ENCODE measurements at regions of chr12 and their contacts with region 1.

Region 1: DNA sequence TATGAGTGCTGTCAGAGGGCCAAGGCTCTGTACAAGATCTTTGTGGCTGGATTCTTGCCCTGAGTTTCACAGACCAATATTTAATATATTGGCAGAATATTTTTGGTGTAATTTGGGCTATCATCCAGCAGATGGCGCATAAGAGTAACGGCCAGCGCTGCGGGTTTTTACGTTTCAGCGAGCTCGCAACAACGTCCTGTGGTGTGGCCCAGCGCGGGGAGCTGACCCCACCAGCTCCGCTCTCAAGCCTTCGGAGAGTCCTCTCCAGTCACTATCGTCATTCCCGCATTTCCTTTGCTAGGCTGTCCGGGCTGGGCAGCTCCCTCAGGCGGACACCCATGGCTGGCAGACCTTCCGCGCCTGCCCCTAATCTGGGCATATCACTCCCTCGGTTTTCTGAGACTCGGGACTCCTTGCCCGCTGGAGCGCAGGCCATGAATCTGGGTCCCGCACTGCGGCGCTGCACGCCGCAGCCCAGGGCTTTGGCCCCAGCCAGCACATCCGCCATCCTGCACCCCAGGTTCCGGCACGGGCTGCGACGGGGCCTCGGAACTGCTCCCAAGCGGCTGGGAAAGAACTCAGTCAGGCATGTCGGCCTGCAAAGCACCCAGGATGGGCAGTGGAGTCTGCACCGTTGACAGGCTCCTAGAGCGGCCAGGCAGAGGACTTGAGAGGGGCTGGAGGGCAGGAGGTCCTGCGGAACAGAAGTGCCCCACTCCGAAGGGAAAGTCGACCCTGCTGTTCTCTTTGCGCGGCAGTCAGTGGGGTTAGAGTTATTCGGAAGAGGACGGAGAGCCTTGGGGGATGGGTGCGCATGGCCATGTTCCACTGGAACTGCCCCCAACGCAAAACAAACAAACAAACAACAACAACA is 18.4 kb downstream of the OLR1 start:
- DNase-seq: peak; percentile 1 to 76 (median 39)
- ATAC-seq: peak; percentile 84
- H3K4me3 ChIP-seq: peak overlapping the region; percentile 87 to 98
- H3K4me3 Mint-ChIP-seq: peak overlapping the region; percentile 88 to 94 (median 89)
- H3K27ac ChIP-seq: peak overlapping the region; percentile 16
- H3K27ac Mint-ChIP-seq: peak overlapping the region in 1 of 2 donors; percentile 55
- H3K4me1 ChIP-seq: peaks cover 3 to 13% of the 10 kb centered on the region in 2 experiments
- H3K4me1 Mint-ChIP-seq: peaks cover 12 to 15% (median 12%) of the 10 kb centered on the region in 3 donors
- H3K27me3 ChIP-seq: peaks cover 0 to 18% of the 10 kb centered on the region in 2 experiments
- H3K27me3 Mint-ChIP-seq: peaks cover 3 to 12% of the 10 kb centered on the region in 2 donors

Region 2: GRCh38 chr12:10082117-10082874 is 71.2 kb before region 1 on chr12:
- CTCF ChIA-PET with region 1: no interaction called
- POLR2A ChIA-PET with region 1: no interaction called
- DNase-seq: no peak
- ATAC-seq: no peak
- H3K4me3 ChIP-seq: no peak overlapping the region
- H3K4me3 Mint-ChIP-seq: no peak overlapping the region
- H3K27ac ChIP-seq: no peak overlapping the region
- H3K27ac Mint-ChIP-seq: no peak overlapping the region
- H3K4me1 ChIP-seq: no peaks in the 10 kb centered on the region
- H3K4me1 Mint-ChIP-seq: no peaks in the 10 kb centered on the region
- H3K27me3 ChIP-seq: peaks cover 0 to 13% of the 10 kb centered on the region in 2 experiments
- H3K27me3 Mint-ChIP-seq: peaks cover 12 to 16% of the 10 kb centered on the region in 2 donors

Region 3: GRCh38 chr12:10190558-10191388 is 37.3 kb after region 1 on chr12:
- CTCF ChIA-PET with region 1: interaction called, 7 to 17 read pairs
- POLR2A ChIA-PET with region 1: no interaction called
- DNase-seq: peak; percentile 16 to 73 (median 45)
- ATAC-seq: peak; percentile 99 to 100 (median 100)
- H3K4me3 ChIP-seq: no peak overlapping the region
- H3K4me3 Mint-ChIP-seq: no peak overlapping the region
- H3K27ac ChIP-seq: no peak overlapping the region
- H3K27ac Mint-ChIP-seq: no peak overlapping the region
- H3K4me1 ChIP-seq: no peaks in the 10 kb centered on the region
- H3K4me1 Mint-ChIP-seq: peaks cover 5% of the 10 kb centered on the region in 3 donors
- H3K27me3 ChIP-seq: peaks cover 0 to 24% of the 10 kb centered on the region in 2 experiments
- H3K27me3 Mint-ChIP-seq: peaks cover 8 to 24% of the 10 kb centered on the region in 2 donors